Sciatic nerve (tissue), 2 donors: ENCODE measurements at regions of chr17 and their contacts with region 1.

Region 1: GRCh38 chr17:74892974-74893911 is at the start of gene FADS6:
- DNase-seq: no peak
- ATAC-seq: no peak
- total RNA-seq, gene FADS6: not detected

Region 2: GRCh38 chr17:73956669-73957465 is 936.4 kb before region 1 on chr17:
- intact Hi-C with region 1: loop called (anchors 5 kb)
- DNase-seq: no peak
- ATAC-seq: no peak

Region 3: GRCh38 chr17:74759243-74759801 is 133.9 kb before region 1 on chr17:
- intact Hi-C with region 1: no loop called
- DNase-seq: no peak
- ATAC-seq: no peak

Region 4: GRCh38 chr17:74833501-74834377 is 59.5 kb before region 1 on chr17:
- intact Hi-C with region 1: no loop called
- DNase-seq: peak; percentile 70
- ATAC-seq: peak; percentile 60

Region 5: DNA sequence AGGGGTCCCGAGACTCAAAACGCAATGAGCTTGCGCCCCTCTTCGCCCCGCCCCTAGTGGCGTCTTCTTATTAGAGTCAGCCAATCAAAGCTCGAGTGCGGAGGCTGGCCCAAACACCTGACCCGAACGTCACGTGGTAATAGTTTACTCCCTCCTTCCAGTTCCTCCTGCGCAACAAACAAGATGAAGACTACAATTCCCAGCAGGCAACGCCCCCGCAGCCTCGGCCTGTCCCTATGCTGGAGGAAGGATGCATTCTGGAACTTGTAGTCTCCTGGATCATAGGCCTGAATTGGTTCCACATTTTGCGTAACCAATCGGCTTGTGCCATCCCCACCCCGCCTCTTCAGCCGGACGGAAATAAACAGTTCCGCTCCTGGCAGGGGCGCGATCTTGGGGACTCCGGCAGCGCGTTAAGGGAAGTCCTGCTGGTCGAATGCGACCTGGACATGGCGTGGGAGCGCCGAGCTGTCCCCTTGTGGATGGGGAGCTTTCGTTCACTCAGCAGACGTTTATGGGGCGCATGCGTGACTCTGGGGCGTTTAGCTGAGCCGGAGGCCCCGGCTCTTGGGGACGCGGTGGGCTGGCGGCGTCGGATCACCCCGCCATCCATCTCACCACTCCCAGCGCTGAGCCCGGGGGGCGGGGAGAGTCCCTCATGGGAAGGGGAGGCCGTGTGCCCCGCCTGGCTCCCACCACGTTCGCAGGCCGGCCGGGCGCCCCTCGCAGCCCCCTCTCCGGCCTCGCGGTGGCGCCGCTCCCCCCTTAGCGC is 962.3 kb after region 1 on chr17 and contains the start of gene WBP2:
- intact Hi-C with region 1: no loop called
- DNase-seq: peak; percentile 99
- ATAC-seq: peak; percentile 97
- total RNA-seq, gene WBP2: 156 TPM